ENCODE measurements at regions of chr1 and their contacts with region 1.

Region 1: DNA sequence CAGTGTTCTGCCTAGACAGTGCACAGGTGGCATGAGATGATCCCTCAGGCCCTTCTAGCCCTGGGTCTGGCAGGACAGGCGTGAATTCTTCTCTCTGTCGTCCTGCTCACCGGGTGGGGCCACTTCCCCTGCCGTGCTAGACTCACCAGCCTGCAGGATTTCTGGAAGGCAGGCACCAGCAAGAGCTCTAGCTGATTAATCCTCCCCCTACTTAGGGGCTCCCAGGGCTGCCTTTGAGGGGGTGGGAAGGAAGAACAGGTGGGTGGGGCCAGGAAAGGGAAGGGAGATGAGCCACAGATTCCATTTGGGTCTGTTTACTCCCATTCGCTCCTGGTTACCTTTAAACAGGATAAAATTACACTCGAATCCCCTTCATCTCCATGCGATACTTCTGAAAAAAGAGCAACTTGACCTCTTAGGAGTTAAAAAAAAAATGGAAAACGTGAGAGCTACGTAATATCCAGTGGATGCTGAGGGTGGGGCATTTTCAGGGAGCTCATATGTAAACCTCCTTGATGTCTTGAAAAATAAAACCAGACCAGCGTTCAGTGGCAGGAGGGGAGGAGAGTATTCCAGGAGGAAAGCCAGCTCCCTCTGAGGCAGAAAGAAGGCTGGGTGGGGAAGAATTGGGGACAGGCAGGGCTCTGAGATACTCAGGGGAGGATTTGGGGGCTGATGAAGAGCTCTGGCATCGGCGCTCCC is 665.5 kb downstream of the PTPRU start:
- DNase-seq: no peak
- ATAC-seq: peak; percentile 45 to 46
- H3K4me3 ChIP-seq: no peak overlapping the region
- H3K27ac ChIP-seq: peak overlapping the region in 3 of 4 donors; percentile 36 to 67 (median 37)
- H3K4me1 ChIP-seq: peaks cover 14 to 21% of the 10 kb centered on the region in 2 donors
- H3K27me3 ChIP-seq: no peaks in the 10 kb centered on the region
- CTCF ChIP-seq: no peak
- POLR2A ChIP-seq: no peak

Region 2: DNA sequence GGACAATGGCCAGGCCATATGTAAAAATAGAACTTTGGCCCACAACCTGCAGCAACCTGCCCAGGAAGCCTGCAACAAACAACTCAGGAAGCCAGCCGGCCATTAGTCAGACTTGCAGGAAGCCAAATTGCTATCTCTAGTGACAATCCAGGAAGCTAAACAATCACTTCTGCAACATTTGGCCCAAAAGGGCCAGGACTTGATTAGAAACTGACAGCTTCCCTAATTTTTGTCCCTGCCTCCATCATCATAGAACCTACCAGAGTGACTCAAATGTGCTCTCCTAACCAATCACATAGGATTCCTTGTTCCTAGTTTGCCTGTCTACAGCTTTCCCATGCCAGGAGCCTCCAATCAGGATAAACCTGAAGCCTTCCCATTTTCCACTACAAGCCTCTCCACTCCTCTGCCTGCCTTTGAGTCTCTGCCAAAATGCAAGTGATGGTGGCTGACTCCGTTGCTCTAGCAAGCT is 26.2 kb before region 1 on chr1:
- in situ Hi-C with region 1: no loop called
- intact Hi-C with region 1: loop called (anchors 1 kb)
- DNase-seq: peak in 1 of 2 donors; percentile 36
- ATAC-seq: peak; percentile 79 to 80
- H3K4me3 ChIP-seq: no peak overlapping the region
- H3K27ac ChIP-seq: peak overlapping the region in 2 of 4 donors; percentile 27 to 49
- H3K4me1 ChIP-seq: peaks cover 15 to 19% of the 10 kb centered on the region in 2 donors
- H3K27me3 ChIP-seq: no peaks in the 10 kb centered on the region
- CTCF ChIP-seq: no peak
- POLR2A ChIP-seq: no peak

Region 3: DNA sequence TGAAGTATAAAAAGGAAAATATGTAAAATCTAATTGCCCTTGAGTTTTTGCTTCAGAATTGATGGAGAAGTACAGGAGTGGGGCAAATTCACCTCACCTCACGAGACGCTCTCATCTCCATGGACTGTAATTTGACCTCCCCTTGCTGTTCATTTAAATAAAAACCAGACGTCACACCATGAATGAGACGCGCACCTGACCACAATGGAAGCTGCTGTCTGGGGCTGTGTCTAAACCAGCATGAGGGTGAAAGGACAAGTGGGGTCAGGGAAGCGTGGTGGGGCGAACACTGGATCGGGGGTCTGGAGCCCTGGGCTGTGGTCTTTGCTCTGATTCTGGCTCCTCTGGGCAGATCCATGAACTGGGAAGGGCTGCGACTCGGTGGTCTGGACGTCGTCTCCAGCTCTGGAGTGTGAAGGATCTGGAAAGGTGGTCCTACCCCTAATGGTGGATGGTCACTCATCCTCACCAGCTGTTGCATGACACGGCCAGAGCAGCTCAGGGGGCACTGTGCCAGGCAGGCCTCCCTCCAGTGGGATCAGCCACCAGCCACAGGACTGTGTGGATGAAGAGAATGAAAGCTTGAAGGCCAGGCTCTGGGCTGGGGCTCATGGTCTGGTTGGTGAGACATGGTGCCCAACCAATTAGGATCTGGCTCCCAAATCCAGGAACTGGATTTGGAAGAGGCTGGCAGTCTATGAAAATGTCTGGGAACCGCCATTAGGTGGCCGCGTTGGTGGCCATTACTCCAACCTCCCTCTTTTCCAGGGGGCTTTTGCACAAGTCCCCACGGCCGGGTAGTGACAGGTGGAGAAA is 63.2 kb after region 1 on chr1:
- in situ Hi-C with region 1: no loop called
- intact Hi-C with region 1: no loop called
- DNase-seq: no peak
- ATAC-seq: no peak
- H3K4me3 ChIP-seq: no peak overlapping the region
- H3K27ac ChIP-seq: no peak overlapping the region
- H3K4me1 ChIP-seq: no peaks in the 10 kb centered on the region
- H3K27me3 ChIP-seq: peaks cover 7 to 12% (median 9%) of the 10 kb centered on the region in 3 donors
- CTCF ChIP-seq: no peak
- POLR2A ChIP-seq: no peak

Measured in gastrocnemius medialis (tissue), 4 donors.